Gastrocnemius medialis (tissue), 4 donors: ENCODE measurements at regions of chr18 and their contacts with region 1.

Region 1: GRCh38 chr18:12726774-12727550 is 24.1 kb downstream of the PSMG2 start:
- DNase-seq: peak; percentile 14 to 25
- ATAC-seq: peak in 1 of 2 donors; percentile 58
- H3K4me3 ChIP-seq: no peak overlapping the region
- H3K27ac ChIP-seq: no peak overlapping the region
- H3K4me1 ChIP-seq: no peaks in the 10 kb centered on the region
- H3K27me3 ChIP-seq: no peaks in the 10 kb centered on the region
- CTCF ChIP-seq: peak; percentile 85 to 90 (median 89)
- POLR2A ChIP-seq: no peak

Region 2: DNA sequence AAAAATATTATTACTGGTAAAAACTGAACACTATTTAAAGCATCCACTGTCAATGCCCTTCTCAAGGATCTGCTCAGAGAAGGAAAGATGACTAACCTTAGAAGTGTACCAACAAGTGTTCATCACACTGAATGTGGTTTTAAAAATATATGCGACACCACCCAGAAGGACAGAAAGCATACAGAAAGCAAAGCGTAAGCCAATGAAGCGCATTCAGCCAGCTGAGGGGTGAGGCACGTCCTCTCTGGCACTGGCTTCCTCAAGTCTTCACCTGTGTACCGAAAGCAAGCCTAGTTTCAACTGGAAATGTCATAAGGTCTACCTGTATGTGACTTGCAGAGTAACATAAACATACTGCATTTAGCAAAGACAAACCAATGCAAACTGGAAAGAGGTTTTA is 64.6 kb after region 1 on chr18:
- in situ Hi-C with region 1: no loop called
- intact Hi-C with region 1: no loop called
- DNase-seq: no peak
- ATAC-seq: no peak
- H3K4me3 ChIP-seq: no peak overlapping the region
- H3K27ac ChIP-seq: no peak overlapping the region
- H3K4me1 ChIP-seq: no peaks in the 10 kb centered on the region
- H3K27me3 ChIP-seq: no peaks in the 10 kb centered on the region
- CTCF ChIP-seq: no peak
- POLR2A ChIP-seq: no peak

Region 3: GRCh38 chr18:12934454-12935071 is 207.6 kb after region 1 on chr18:
- in situ Hi-C with region 1: loop called in 3 of 4 experiments (anchors 5 kb)
- intact Hi-C with region 1: loop called (anchors 1 kb)
- DNase-seq: peak; percentile 51 to 65
- ATAC-seq: peak; percentile 87
- H3K4me3 ChIP-seq: no peak overlapping the region
- H3K27ac ChIP-seq: no peak overlapping the region
- H3K4me1 ChIP-seq: no peaks in the 10 kb centered on the region
- H3K27me3 ChIP-seq: no peaks in the 10 kb centered on the region
- CTCF ChIP-seq: peak; percentile 78 to 91 (median 85)
- POLR2A ChIP-seq: no peak

Region 4: DNA sequence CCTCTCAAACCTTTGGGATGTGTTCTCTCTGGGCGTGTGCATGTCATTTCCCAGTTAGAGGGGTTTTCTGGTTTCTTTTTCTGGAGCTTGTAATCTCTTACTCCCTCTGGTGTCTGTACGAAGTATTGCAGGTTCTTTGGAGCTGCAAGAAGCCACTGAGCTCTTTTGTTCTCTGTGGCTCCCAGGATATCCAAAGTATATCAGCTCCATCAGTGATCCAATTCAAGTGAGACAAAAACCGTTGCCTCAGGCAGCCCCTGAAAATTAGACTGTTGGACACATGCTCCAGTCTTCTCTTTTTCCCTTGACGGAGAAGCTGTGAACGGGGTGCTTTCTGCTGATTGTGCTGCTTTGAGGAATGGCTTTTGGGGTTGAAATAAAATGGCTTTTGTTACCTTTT is 432.6 kb after region 1 on chr18:
- in situ Hi-C with region 1: loop called (anchors 25 kb)
- intact Hi-C with region 1: loop called (anchors 5 kb)
- DNase-seq: no peak
- ATAC-seq: peak in 1 of 2 donors; percentile 61
- H3K4me3 ChIP-seq: no peak overlapping the region
- H3K27ac ChIP-seq: no peak overlapping the region
- H3K4me1 ChIP-seq: no peaks in the 10 kb centered on the region
- H3K27me3 ChIP-seq: no peaks in the 10 kb centered on the region
- CTCF ChIP-seq: peak; percentile 56 to 78 (median 69)
- POLR2A ChIP-seq: no peak